Activated naive CD4-positive, alpha-beta T cell treated with anti-CD3 and anti-CD28 coated beads for 36 hours (primary cell): ENCODE measurements at regions of chrX and their contacts with region 1.

Region 1: GRCh38 chrX:13750204-13750603 is 15.7 kb downstream of the OFD1 start:
- DNase-seq: no peak
- H3K4me3 Mint-ChIP-seq: no peak overlapping the region
- H3K27ac Mint-ChIP-seq: no peak overlapping the region
- H3K4me1 Mint-ChIP-seq: peaks cover 28% of the 10 kb centered on the region
- H3K27me3 Mint-ChIP-seq: no peaks in the 10 kb centered on the region

Region 2: GRCh38 chrX:13283950-13284914 is 466.0 kb before region 1 on chrX:
- CTCF ChIA-PET with region 1: no interaction called
- intact Hi-C with region 1: no loop called
- DNase-seq: no peak
- H3K4me3 Mint-ChIP-seq: no peak overlapping the region
- H3K27ac Mint-ChIP-seq: no peak overlapping the region
- H3K4me1 Mint-ChIP-seq: peaks cover 4% of the 10 kb centered on the region
- H3K27me3 Mint-ChIP-seq: no peaks in the 10 kb centered on the region

Region 3: DNA sequence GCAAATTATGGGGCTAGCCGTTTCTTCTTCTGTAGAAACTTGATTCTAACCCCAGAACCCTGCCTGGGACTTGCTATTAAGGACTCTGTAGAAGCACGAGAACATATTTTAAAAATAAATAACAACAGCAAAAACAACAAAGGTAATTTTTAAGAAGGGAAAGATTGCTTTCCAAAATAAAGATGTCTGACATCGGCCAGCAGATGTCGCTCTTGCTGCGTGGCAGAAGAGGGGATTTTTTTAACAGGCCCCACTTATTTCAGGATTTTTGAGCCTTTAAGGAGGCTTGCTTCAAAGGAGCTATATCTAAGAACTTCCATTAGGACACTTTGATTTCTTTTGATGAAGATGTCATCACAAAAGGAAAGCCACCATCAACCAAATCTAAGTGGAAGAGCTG is 243.6 kb before region 1 on chrX:
- CTCF ChIA-PET with region 1: interaction called, 4 read pairs
- intact Hi-C with region 1: loop called (anchors 5 kb)
- DNase-seq: peak; percentile 61
- H3K4me3 Mint-ChIP-seq: no peak overlapping the region
- H3K27ac Mint-ChIP-seq: no peak overlapping the region
- H3K4me1 Mint-ChIP-seq: peaks cover 7% of the 10 kb centered on the region
- H3K27me3 Mint-ChIP-seq: no peaks in the 10 kb centered on the region

Region 4: GRCh38 chrX:13658602-13659001 is 91.6 kb before region 1 on chrX:
- CTCF ChIA-PET with region 1: interaction called, 5 read pairs
- intact Hi-C with region 1: loop called (anchors 1 kb)
- DNase-seq: no peak
- H3K4me3 Mint-ChIP-seq: no peak overlapping the region
- H3K27ac Mint-ChIP-seq: no peak overlapping the region
- H3K4me1 Mint-ChIP-seq: peaks cover 32% of the 10 kb centered on the region
- H3K27me3 Mint-ChIP-seq: no peaks in the 10 kb centered on the region

Region 5: GRCh38 chrX:13898083-13898482 is 147.9 kb after region 1 on chrX:
- CTCF ChIA-PET with region 1: no interaction called
- intact Hi-C with region 1: loop called (anchors 5 kb)
- DNase-seq: peak; percentile 15
- H3K4me3 Mint-ChIP-seq: no peak overlapping the region
- H3K27ac Mint-ChIP-seq: no peak overlapping the region
- H3K4me1 Mint-ChIP-seq: peaks cover 2% of the 10 kb centered on the region
- H3K27me3 Mint-ChIP-seq: no peaks in the 10 kb centered on the region